Naive thymus-derived CD4-positive, alpha-beta T cell (primary cell): ENCODE measurements at regions of chr19 and their contacts with region 1.

Region 1: GRCh38 chr19:13117772-13118423 is at the start of gene NACC1:
- DNase-seq: peak; percentile 81 to 94 (median 89)
- ATAC-seq: peak; percentile 95
- H3K4me3 ChIP-seq: peak within 1 kb of the TSS; percentile 97
- H3K4me3 Mint-ChIP-seq: peak within 1 kb of the TSS; percentile 86 to 99 (median 97)
- H3K27ac ChIP-seq: peak within 1 kb of the TSS; percentile 84
- H3K27ac Mint-ChIP-seq: peak within 1 kb of the TSS; percentile 85 to 96 (median 91)
- H3K4me1 ChIP-seq: peaks cover 25 to 30% of the 10 kb centered on the region in 2 donors
- H3K4me1 Mint-ChIP-seq: peaks cover 16 to 64% (median 49%) of the 10 kb centered on the region in 7 donors
- H3K27me3 ChIP-seq: no peaks in the 10 kb centered on the region
- H3K27me3 Mint-ChIP-seq: no peaks in the 10 kb centered on the region
- total RNA-seq, gene NACC1: 18.0 to 72.7 (median 22.4) TPM

Region 2: GRCh38 chr19:12736995-12737834 is 380.7 kb before region 1 on chr19 and contains the start of gene GET3:
- CTCF ChIA-PET with region 1: no interaction called
- POLR2A ChIA-PET with region 1: interaction called, 3 read pairs
- intact Hi-C with region 1: loop called in 1 of 2 experiments (anchors 5 kb)
- DNase-seq: peak; percentile 53 to 92 (median 86)
- ATAC-seq: peak; percentile 85
- H3K4me3 ChIP-seq: peak within 1 kb of the TSS; percentile 76
- H3K4me3 Mint-ChIP-seq: peak within 1 kb of the TSS; percentile 96 to 100 (median 99)
- H3K27ac ChIP-seq: peak within 1 kb of the TSS; percentile 93
- H3K27ac Mint-ChIP-seq: peak within 1 kb of the TSS; percentile 90 to 99 (median 97)
- H3K4me1 ChIP-seq: peaks cover 27 to 30% of the 10 kb centered on the region in 2 donors
- H3K4me1 Mint-ChIP-seq: peaks cover 29 to 42% (median 38%) of the 10 kb centered on the region in 7 donors
- H3K27me3 ChIP-seq: no peaks in the 10 kb centered on the region
- H3K27me3 Mint-ChIP-seq: no peaks in the 10 kb centered on the region
- total RNA-seq, gene GET3: 22.6 to 60.3 (median 27.0) TPM

Region 3: DNA sequence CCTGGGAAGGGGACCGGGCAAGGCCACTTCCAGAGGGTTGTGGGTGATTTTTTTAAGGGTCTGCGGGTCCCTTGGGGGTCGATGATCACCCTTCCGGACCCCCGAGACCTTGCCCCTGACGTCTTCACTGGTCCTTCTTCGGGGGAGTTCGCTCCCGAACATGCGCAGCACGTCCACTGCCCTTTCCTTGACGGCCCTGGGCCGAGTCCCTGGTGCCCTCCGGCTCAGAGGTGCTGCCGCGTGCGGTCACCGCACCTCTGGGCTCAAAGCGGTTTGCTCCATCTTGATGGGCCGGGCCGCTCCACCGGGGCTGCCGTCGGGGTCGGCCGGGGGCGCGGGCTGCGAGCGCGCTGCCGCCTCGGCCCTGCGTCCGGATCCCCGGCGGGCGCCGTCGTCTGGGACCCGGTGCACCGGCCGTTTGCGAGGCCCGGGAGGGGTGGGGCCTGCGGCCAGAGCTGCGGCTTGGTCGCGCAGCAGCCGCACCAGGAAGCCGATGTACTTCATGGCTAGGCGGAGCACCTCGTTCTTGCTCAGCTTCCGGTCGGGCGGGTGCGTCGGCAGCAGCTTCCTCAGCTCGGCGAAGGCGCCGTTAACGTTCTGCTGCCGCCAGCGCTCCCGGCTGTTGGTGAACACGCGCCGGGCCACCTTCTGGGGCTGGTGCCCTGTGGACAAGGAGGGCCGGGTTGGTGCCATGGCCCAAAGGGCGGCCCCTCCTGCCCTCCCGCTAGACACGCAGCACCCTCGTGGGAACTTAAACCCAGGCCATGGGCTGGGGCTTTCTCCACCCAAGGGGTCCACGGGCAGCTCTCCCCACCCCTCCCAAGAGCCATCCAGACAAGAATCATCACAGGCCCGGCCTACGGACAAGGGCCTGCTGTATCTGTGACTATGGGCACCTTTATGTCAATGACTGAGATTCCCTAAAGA is 18.6 kb before region 1 on chr19:
- CTCF ChIA-PET with region 1: interaction called, 19 read pairs
- POLR2A ChIA-PET with region 1: interaction called, 53 read pairs
- intact Hi-C with region 1: loop called (anchors 1 kb)
- DNase-seq: peak; percentile 67 to 85 (median 81)
- ATAC-seq: peak; percentile 66
- H3K4me3 ChIP-seq: peak overlapping the region; percentile 74
- H3K4me3 Mint-ChIP-seq: peak overlapping the region; percentile 80 to 90 (median 86)
- H3K27ac ChIP-seq: peak overlapping the region; percentile 82
- H3K27ac Mint-ChIP-seq: peak overlapping the region; percentile 88 to 99 (median 93)
- H3K4me1 ChIP-seq: peaks cover 70 to 71% of the 10 kb centered on the region in 2 donors
- H3K4me1 Mint-ChIP-seq: peaks cover 17 to 64% (median 53%) of the 10 kb centered on the region in 7 donors
- H3K27me3 ChIP-seq: peaks cover 0 to 6% of the 10 kb centered on the region in 2 donors
- H3K27me3 Mint-ChIP-seq: peaks cover 6 to 35% (median 16%) of the 10 kb centered on the region in 5 donors

Region 4: DNA sequence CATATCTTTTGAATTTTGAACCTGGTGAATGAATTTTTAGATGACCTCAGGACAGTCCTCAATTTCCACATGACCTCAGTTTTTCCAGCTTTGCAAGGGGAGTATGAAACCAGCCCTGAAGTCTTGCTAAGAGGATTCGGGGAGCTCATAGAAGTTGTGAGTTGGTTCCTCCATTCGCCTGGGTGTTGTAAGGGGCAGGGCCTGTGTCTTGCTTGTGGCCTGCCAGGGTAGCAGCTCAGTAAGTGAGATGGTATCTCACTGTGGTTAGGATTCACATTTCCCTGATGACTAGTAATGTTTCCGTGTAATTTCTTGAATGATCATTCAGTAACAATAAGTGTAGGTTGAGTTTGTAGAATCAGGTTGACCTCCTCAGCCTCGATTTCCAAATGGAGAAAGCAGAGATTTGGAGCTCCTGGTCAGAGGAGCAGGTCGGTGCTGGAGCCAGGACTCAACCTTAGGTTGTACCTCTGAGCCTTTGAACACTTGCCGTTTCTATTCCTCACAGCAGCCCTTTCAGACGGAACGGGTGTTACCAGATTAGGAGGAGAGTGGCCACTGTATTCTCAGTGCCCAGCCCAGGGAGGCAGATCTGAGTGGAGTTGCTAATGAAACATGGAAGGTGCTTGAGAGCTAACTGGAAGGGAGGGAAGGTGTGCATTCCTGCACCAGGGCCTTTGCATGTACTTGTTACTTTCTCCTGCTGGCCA is 14.7 kb after region 1 on chr19:
- CTCF ChIA-PET with region 1: interaction called, 3 read pairs
- POLR2A ChIA-PET with region 1: interaction called, 3 read pairs
- intact Hi-C with region 1: loop called in 1 of 2 experiments (anchors 2 kb)
- DNase-seq: peak in 1 of 9 donors; percentile 63
- ATAC-seq: peak; percentile 91
- H3K4me3 ChIP-seq: no peak overlapping the region
- H3K4me3 Mint-ChIP-seq: peak overlapping the region in 3 of 10 donors; percentile 7 to 59 (median 12)
- H3K27ac ChIP-seq: no peak overlapping the region
- H3K27ac Mint-ChIP-seq: peak overlapping the region; percentile 14 to 82 (median 43)
- H3K4me1 ChIP-seq: peaks cover 0 to 11% of the 10 kb centered on the region in 2 donors
- H3K4me1 Mint-ChIP-seq: peaks cover 25 to 33% (median 28%) of the 10 kb centered on the region in 7 donors
- H3K27me3 ChIP-seq: no peaks in the 10 kb centered on the region
- H3K27me3 Mint-ChIP-seq: no peaks in the 10 kb centered on the region

Region 5: DNA sequence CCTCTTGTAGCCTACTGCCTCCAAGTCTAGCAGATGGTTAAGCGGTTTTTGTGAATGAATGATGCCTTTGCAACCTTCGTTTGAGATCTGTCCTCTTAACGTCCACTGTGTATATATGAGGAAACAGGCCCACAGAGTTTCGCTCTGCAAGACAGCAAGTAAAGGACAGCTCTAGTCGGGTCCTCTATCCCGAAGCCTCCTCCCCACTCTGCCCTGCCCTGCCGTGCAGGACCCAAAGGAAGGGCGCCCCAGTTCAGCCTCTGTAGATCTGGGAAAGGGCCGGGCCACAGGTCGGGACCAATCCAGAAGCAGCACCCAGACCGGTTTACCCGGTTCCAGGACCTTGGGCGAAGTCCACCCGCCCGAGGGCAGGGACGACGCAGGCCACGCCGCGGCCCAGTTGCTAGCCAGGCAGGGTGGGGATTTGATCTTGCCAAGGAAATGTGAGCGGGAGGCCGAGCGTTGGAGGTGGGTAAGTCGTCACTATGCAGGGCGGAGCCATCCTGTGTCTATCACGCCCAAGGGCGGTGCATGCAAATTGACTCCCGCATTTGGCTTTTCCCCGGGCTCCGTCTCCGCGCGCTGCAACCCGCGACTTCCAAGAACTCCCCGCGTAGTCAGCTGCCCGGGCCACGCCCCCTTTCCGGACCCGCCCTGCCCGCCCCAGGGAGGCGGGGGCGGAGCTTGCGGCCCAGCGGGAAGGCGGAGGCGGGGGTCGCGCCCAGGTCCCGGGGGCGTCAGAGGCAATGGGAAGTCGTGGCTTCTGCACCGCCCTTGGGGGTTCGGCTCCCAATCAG is 44.8 kb after region 1 on chr19:
- CTCF ChIA-PET with region 1: no interaction called
- POLR2A ChIA-PET with region 1: interaction called, 12 read pairs
- intact Hi-C with region 1: loop called in 1 of 2 experiments (anchors 1 kb)
- DNase-seq: peak; percentile 46 to 91 (median 75)
- ATAC-seq: peak; percentile 73
- H3K4me3 ChIP-seq: peak overlapping the region; percentile 60
- H3K4me3 Mint-ChIP-seq: peak overlapping the region; percentile 85 to 94 (median 90)
- H3K27ac ChIP-seq: peak overlapping the region; percentile 90
- H3K27ac Mint-ChIP-seq: peak overlapping the region; percentile 92 to 99 (median 97)
- H3K4me1 ChIP-seq: peaks cover 54 to 73% of the 10 kb centered on the region in 2 donors
- H3K4me1 Mint-ChIP-seq: peaks cover 26 to 87% (median 67%) of the 10 kb centered on the region in 7 donors
- H3K27me3 ChIP-seq: no peaks in the 10 kb centered on the region
- H3K27me3 Mint-ChIP-seq: no peaks in the 10 kb centered on the region

Region 6: GRCh38 chr19:13347367-13347766 is 229.5 kb after region 1 on chr19:
- CTCF ChIA-PET with region 1: no interaction called
- POLR2A ChIA-PET with region 1: no interaction called
- intact Hi-C with region 1: no loop called
- DNase-seq: no peak
- ATAC-seq: no peak
- H3K4me3 ChIP-seq: no peak overlapping the region
- H3K4me3 Mint-ChIP-seq: no peak overlapping the region
- H3K27ac ChIP-seq: no peak overlapping the region
- H3K27ac Mint-ChIP-seq: peak overlapping the region in 1 of 9 donors; percentile 3
- H3K4me1 ChIP-seq: no peaks in the 10 kb centered on the region
- H3K4me1 Mint-ChIP-seq: no peaks in the 10 kb centered on the region
- H3K27me3 ChIP-seq: no peaks in the 10 kb centered on the region
- H3K27me3 Mint-ChIP-seq: peaks cover 0 to 17% (median 12%) of the 10 kb centered on the region in 5 donors

Region 7: GRCh38 chr19:13731147-13731964 is 613.5 kb after region 1 on chr19:
- CTCF ChIA-PET with region 1: no interaction called
- POLR2A ChIA-PET with region 1: no interaction called
- intact Hi-C with region 1: loop called in 1 of 2 experiments (anchors 5 kb)
- DNase-seq: peak; percentile 85 to 95 (median 91)
- ATAC-seq: peak; percentile 100
- H3K4me3 ChIP-seq: peak overlapping the region; percentile 89
- H3K4me3 Mint-ChIP-seq: peak overlapping the region; percentile 82 to 95 (median 92)
- H3K27ac ChIP-seq: peak overlapping the region; percentile 75
- H3K27ac Mint-ChIP-seq: peak overlapping the region; percentile 68 to 95 (median 88)
- H3K4me1 ChIP-seq: peaks cover 3 to 7% of the 10 kb centered on the region in 2 donors
- H3K4me1 Mint-ChIP-seq: peaks cover 6 to 19% (median 11%) of the 10 kb centered on the region in 7 donors
- H3K27me3 ChIP-seq: no peaks in the 10 kb centered on the region
- H3K27me3 Mint-ChIP-seq: no peaks in the 10 kb centered on the region

Region 8: GRCh38 chr19:14081325-14082093 is 963.6 kb after region 1 on chr19:
- CTCF ChIA-PET with region 1: no interaction called
- POLR2A ChIA-PET with region 1: no interaction called
- intact Hi-C with region 1: loop called (anchors 5 kb)
- DNase-seq: peak; percentile 96 to 100 (median 99)
- ATAC-seq: peak; percentile 97
- H3K4me3 ChIP-seq: peak overlapping the region; percentile 86
- H3K4me3 Mint-ChIP-seq: peak overlapping the region; percentile 80 to 98 (median 94)
- H3K27ac ChIP-seq: peak overlapping the region; percentile 80
- H3K27ac Mint-ChIP-seq: peak overlapping the region; percentile 86 to 98 (median 95)
- H3K4me1 ChIP-seq: peaks cover 5 to 15% of the 10 kb centered on the region in 2 donors
- H3K4me1 Mint-ChIP-seq: peaks cover 0 to 27% (median 17%) of the 10 kb centered on the region in 7 donors
- H3K27me3 ChIP-seq: no peaks in the 10 kb centered on the region
- H3K27me3 Mint-ChIP-seq: no peaks in the 10 kb centered on the region